ENCODE measurements at regions of chr16 and their contacts with region 1.

Region 1: DNA sequence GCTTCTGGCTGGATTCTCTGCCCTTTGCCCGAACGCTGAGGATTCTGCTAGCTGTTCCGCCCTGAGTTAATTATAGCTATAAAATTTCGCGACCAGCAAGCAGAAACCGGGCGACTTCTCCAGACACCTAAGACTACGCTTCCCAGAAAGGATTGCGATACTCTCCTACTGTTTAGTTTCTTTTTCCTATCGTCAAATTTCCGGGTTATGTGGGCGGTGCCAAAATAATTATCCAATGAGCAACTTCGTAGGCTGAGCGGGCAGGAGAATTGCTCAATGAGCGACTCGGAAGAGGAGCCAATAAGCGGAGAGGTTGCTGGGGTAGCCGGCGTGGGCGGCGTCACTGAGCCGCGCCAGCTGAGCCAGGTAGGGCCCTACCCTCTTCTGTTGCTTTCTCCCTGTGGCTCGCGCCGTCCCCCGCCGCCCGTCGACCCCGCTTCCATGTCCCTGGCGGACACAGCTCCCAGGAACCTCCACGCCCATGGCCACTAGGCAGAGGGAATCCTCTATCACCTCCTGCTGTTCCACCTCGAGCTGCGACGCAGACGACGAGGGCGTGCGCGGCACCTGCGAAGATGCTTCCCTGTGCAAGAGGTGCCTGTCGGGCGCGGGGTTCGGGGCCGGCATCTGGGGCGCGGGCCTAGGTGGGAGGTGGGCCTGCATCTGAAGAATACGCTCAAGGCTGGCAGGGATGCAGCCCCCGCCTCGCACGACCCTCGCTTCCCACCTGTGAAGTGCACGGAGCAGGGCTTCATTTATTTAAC is at the start of gene LCMT1:
- DNase-seq: peak; percentile 79 to 96 (median 91)
- ATAC-seq: peak; percentile 91 to 92
- H3K4me3 Mint-ChIP-seq: peak within 1 kb of the TSS; percentile 92 to 99 (median 96)
- H3K27ac Mint-ChIP-seq: peak within 1 kb of the TSS; percentile 76 to 96 (median 94)
- H3K4me1 Mint-ChIP-seq: peaks cover 39 to 77% (median 68%) of the 10 kb centered on the region in 4 donors
- H3K27me3 Mint-ChIP-seq: no peaks in the 10 kb centered on the region
- polyA plus RNA-seq, gene LCMT1: 38.7 to 41.4 (median 40.6) TPM

Region 2: GRCh38 chr16:25031441-25032307 is 79.9 kb before region 1 on chr16:
- POLR2A ChIA-PET with region 1: interaction called, 11 read pairs
- DNase-seq: peak; percentile 81 to 95 (median 91)
- ATAC-seq: peak; percentile 100
- H3K4me3 Mint-ChIP-seq: peak overlapping the region; percentile 84 to 99 (median 96)
- H3K27ac Mint-ChIP-seq: peak overlapping the region; percentile 36 to 97 (median 88)
- H3K4me1 Mint-ChIP-seq: peaks cover 34 to 46% (median 35%) of the 10 kb centered on the region in 4 donors
- H3K27me3 Mint-ChIP-seq: no peaks in the 10 kb centered on the region

Region 3: DNA sequence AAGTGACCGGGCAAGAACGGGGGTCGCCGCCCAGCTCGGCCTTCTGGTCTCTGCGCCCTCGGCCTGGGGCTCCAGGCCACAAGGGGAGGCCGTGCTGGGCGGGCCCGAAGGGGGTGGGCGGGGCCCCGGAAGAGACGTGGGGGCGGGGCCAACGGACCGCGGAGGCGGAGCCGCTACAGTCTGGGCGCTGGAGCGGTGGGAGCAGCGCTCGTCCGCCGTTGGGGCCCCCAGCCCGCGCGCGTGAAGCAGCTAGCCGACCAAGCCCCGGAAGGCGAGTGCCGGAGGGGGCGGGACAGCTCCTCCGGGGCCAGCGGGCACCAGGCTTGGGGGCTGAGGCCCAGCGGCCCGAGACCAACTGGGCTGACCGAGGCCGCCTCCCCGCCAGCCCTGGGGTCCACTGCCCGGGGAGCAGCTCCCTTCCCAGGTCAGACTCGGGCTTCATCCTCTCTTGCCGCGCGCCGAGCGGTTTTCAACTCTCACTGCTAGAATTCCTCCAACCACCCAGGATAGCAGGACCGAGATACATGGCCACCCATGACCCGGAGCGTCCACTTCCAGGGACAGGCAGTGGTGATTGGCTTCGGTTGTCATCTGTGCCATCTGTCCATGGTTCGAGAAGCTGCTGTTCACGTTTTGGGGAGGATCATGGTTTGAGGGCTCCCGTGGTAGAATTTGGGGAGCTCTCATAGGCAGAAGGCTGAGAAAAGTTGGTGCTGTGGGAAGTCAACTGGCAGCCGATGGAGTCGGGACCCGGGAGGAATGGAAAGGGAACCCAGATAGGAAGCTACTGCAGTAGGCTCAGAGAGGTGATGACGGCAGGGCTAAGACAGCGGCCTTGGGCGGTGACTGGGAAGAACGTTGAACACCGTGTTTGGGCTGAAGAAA is 44.6 kb before region 1 on chr16:
- POLR2A ChIA-PET with region 1: interaction called, 245 read pairs
- DNase-seq: peak; percentile 49 to 91 (median 78)
- ATAC-seq: peak; percentile 94 to 95
- H3K4me3 Mint-ChIP-seq: peak overlapping the region; percentile 82 to 97 (median 94)
- H3K27ac Mint-ChIP-seq: peak overlapping the region; percentile 76 to 96 (median 94)
- H3K4me1 Mint-ChIP-seq: peaks cover 19 to 56% (median 54%) of the 10 kb centered on the region in 4 donors
- H3K27me3 Mint-ChIP-seq: no peaks in the 10 kb centered on the region

Region 4: GRCh38 chr16:25143928-25144327 is 32.3 kb after region 1 on chr16:
- POLR2A ChIA-PET with region 1: no interaction called
- DNase-seq: no peak
- ATAC-seq: no peak
- H3K4me3 Mint-ChIP-seq: no peak overlapping the region
- H3K27ac Mint-ChIP-seq: no peak overlapping the region
- H3K4me1 Mint-ChIP-seq: peaks cover 0 to 1% (median 0%) of the 10 kb centered on the region in 4 donors
- H3K27me3 Mint-ChIP-seq: no peaks in the 10 kb centered on the region

Measured in naive thymus-derived CD8-positive, alpha-beta T cell (primary cell).